Activated CD8-positive, alpha-beta T cell treated with anti-CD3 and anti-CD28 coated beads for 36 hours (primary cell): ENCODE measurements at regions of chr10 and their contacts with region 1.

Region 1: GRCh38 chr10:36888929-36889573 is 236.3 kb upstream of the ANKRD30A start:
- DNase-seq: peak; percentile 71
- ATAC-seq: peak; percentile 51
- H3K4me3 Mint-ChIP-seq: no peak overlapping the region
- H3K27ac Mint-ChIP-seq: no peak overlapping the region
- H3K4me1 Mint-ChIP-seq: no peaks in the 10 kb centered on the region
- H3K27me3 Mint-ChIP-seq: no peaks in the 10 kb centered on the region
- CTCF ChIP-seq: peak; percentile 70

Region 2: GRCh38 chr10:36647540-36647939 is 241.5 kb before region 1 on chr10:
- CTCF ChIA-PET with region 1: no interaction called
- POLR2A ChIA-PET with region 1: no interaction called
- intact Hi-C with region 1: no loop called
- DNase-seq: no peak
- ATAC-seq: no peak
- H3K4me3 Mint-ChIP-seq: no peak overlapping the region
- H3K27ac Mint-ChIP-seq: no peak overlapping the region
- H3K4me1 Mint-ChIP-seq: no peaks in the 10 kb centered on the region
- H3K27me3 Mint-ChIP-seq: no peaks in the 10 kb centered on the region
- CTCF ChIP-seq: no peak

Region 3: GRCh38 chr10:37495415-37495814 is 606.4 kb after region 1 on chr10:
- CTCF ChIA-PET with region 1: no interaction called
- POLR2A ChIA-PET with region 1: no interaction called
- intact Hi-C with region 1: loop called (anchors 10 kb)
- DNase-seq: no peak
- ATAC-seq: no peak
- H3K4me3 Mint-ChIP-seq: no peak overlapping the region
- H3K27ac Mint-ChIP-seq: no peak overlapping the region
- H3K4me1 Mint-ChIP-seq: no peaks in the 10 kb centered on the region
- H3K27me3 Mint-ChIP-seq: no peaks in the 10 kb centered on the region
- CTCF ChIP-seq: no peak